Ovary (tissue), 10 donors: ENCODE measurements at regions of chr5 and their contacts with region 1.

Region 1: GRCh38 chr5:2200261-2200950 is 317.7 kb upstream of the IRX4 start:
- DNase-seq: no peak
- H3K4me3 ChIP-seq: no peak overlapping the region
- H3K27ac ChIP-seq: no peak overlapping the region
- H3K4me1 ChIP-seq: no peaks in the 10 kb centered on the region
- H3K27me3 ChIP-seq: no peaks in the 10 kb centered on the region
- CTCF ChIP-seq: no peak
- EP300 ChIP-seq: no peak
- POLR2A ChIP-seq: no peak

Region 2: GRCh38 chr5:1659100-1659981 is 541.1 kb before region 1 on chr5:
- intact Hi-C with region 1: loop called in 1 of 4 experiments (anchors 5 kb)
- DNase-seq: no peak
- H3K4me3 ChIP-seq: no peak overlapping the region
- H3K27ac ChIP-seq: no peak overlapping the region
- H3K4me1 ChIP-seq: no peaks in the 10 kb centered on the region
- H3K27me3 ChIP-seq: no peaks in the 10 kb centered on the region
- CTCF ChIP-seq: no peak
- EP300 ChIP-seq: no peak
- POLR2A ChIP-seq: no peak

Region 3: DNA sequence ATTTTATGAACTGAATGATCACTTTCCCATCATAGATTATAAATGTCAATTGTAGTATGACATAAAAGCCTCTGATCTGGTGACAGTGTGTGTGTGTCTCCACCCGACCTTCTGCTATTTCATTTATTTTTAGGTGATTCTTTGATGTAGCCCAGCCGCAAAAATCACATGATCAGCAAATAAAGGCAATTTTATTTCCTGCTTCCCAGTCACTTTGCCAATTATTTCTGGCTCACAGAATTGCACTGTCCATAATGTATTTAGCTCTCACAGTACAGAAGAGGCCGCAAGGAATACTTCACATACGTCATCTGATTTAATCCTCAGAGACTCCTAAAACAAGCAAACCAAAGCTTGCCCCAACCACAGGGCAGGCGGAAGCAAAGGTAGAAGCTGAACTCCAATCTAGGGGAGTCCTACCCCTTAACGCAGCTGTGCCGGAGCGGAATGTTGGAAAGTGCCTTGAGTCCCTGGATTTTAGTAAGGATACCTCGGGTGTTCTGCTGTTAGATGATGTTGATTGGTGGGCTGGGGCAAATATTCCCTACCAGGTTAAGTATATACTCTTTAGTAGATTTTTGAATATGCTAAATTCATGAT is 66.3 kb after region 1 on chr5:
- intact Hi-C with region 1: no loop called
- DNase-seq: no peak
- H3K4me3 ChIP-seq: no peak overlapping the region
- H3K27ac ChIP-seq: no peak overlapping the region
- H3K4me1 ChIP-seq: no peaks in the 10 kb centered on the region
- H3K27me3 ChIP-seq: no peaks in the 10 kb centered on the region
- CTCF ChIP-seq: no peak
- EP300 ChIP-seq: no peak
- POLR2A ChIP-seq: no peak